ENCODE measurements at regions of chr16 and their contacts with region 1.

Region 1: GRCh38 chr16:25126820-25127232 is 15.3 kb downstream of the LCMT1 start:
- DNase-seq: no peak

Region 2: DNA sequence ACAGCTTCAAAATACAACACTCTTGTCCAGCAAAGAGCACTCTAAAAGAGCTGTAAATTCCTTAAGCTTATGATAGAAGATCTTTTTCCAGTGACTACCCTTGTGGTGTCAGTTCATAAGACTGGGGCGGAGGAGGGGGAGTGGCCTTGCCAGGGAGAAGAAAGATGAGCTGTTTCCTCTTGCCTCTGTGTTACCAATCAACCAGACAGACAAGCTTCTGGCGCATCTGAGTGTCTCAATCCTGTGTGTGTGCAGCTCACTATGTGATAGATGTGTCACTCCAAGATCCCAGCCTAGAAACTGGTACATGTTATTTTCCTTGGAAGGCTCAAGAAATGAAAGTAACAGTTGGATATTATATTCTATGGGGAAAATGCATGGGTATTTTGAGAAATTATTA is 1038.1 kb before region 1 on chr16:
- intact Hi-C with region 1: no loop called
- DNase-seq: no peak

Region 3: GRCh38 chr16:25051406-25052150 is 75.2 kb before region 1 on chr16:
- intact Hi-C with region 1: loop called in 1 of 2 experiments (anchors 5 kb)
- DNase-seq: no peak

Region 4: GRCh38 chr16:25063865-25064264 is 63.0 kb before region 1 on chr16:
- intact Hi-C with region 1: no loop called
- DNase-seq: no peak

Region 5: GRCh38 chr16:25093208-25094061 is 33.4 kb before region 1 on chr16:
- intact Hi-C with region 1: loop called in 1 of 2 experiments (anchors 2 kb)
- DNase-seq: no peak

Region 6: DNA sequence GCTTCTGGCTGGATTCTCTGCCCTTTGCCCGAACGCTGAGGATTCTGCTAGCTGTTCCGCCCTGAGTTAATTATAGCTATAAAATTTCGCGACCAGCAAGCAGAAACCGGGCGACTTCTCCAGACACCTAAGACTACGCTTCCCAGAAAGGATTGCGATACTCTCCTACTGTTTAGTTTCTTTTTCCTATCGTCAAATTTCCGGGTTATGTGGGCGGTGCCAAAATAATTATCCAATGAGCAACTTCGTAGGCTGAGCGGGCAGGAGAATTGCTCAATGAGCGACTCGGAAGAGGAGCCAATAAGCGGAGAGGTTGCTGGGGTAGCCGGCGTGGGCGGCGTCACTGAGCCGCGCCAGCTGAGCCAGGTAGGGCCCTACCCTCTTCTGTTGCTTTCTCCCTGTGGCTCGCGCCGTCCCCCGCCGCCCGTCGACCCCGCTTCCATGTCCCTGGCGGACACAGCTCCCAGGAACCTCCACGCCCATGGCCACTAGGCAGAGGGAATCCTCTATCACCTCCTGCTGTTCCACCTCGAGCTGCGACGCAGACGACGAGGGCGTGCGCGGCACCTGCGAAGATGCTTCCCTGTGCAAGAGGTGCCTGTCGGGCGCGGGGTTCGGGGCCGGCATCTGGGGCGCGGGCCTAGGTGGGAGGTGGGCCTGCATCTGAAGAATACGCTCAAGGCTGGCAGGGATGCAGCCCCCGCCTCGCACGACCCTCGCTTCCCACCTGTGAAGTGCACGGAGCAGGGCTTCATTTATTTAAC is 15.2 kb before region 1 on chr16 and contains the start of gene LCMT1:
- intact Hi-C with region 1: no loop called
- DNase-seq: peak; percentile 96
- total RNA-seq, gene LCMT1: 23.2 to 26.5 TPM

Measured in posterior vena cava (tissue), 2 donors.